Sigmoid colon (tissue), 7 donors: ENCODE measurements at regions of chr11 and their contacts with region 1.

Region 1: GRCh38 chr11:117205211-117205818 is 6.1 kb downstream of the TAGLN start:
- DNase-seq: no peak
- H3K4me3 ChIP-seq: peak overlapping the region in 3 of 4 donors; percentile 59 to 87 (median 85)
- H3K27ac ChIP-seq: peak overlapping the region; percentile 90 to 99 (median 96)
- H3K4me1 ChIP-seq: peaks cover 0 to 38% (median 31%) of the 10 kb centered on the region in 4 donors
- H3K27me3 ChIP-seq: no peaks in the 10 kb centered on the region
- CTCF ChIP-seq: no peak
- EP300 ChIP-seq: no peak
- POLR2A ChIP-seq: no peak

Region 2: GRCh38 chr11:117127171-117127901 is 78.0 kb before region 1 on chr11:
- intact Hi-C with region 1: loop called (anchors 2 kb)
- DNase-seq: no peak
- H3K4me3 ChIP-seq: no peak overlapping the region
- H3K27ac ChIP-seq: no peak overlapping the region
- H3K4me1 ChIP-seq: no peaks in the 10 kb centered on the region
- H3K27me3 ChIP-seq: no peaks in the 10 kb centered on the region
- CTCF ChIP-seq: no peak
- EP300 ChIP-seq: no peak
- POLR2A ChIP-seq: no peak